PC-3 (cell line): ENCODE measurements at regions of chr10 and their contacts with region 1.

Region 1: GRCh38 chr10:64760371-64760770 is 1239.2 kb downstream of the REEP3 start:
- DNase-seq: peak; percentile 62
- ATAC-seq: peak; percentile 37; the same call in 1 of the 2 replicates
- H3K4me3 ChIP-seq: no peak overlapping the region
- H3K27ac ChIP-seq: no peak overlapping the region
- H3K4me1 ChIP-seq: no peaks in the 10 kb centered on the region
- H3K27me3 ChIP-seq: no peaks in the 10 kb centered on the region
- CTCF ChIP-seq: no peak

Region 2: DNA sequence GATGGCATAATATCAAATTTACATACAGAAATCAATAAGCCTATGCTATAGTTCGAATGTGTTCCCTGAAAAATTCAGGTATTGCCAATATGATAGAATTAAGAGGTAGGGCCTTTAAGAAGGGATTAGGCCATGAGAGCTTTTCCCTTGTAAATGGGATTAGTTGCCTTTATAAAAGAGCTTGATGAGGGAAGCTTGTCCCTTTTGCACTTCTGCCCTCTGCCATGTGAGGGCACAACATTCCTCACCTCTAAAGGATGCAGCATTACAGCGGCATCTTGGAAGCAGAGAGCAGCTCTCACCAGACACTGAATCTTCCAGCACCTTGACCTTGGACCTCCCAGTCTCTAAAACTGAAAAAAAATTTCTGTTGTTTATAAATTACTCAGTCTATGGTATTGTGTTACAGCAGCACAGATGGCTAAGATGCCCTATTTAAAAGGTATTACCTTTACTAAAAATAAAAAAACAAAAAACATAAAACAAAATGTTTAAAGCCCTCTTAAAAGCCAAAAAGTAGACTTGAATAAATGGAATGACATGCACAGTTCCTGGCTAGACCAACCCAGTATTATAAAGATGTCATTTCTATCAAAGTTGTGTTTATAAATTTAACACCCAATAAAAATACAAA is 329.6 kb before region 1 on chr10:
- CTCF ChIA-PET with region 1: no interaction called
- POLR2A ChIA-PET with region 1: no interaction called
- intact Hi-C with region 1: no loop called
- DNase-seq: peak; percentile 81
- ATAC-seq: peak; percentile 99
- H3K4me3 ChIP-seq: no peak overlapping the region
- H3K27ac ChIP-seq: no peak overlapping the region
- H3K4me1 ChIP-seq: no peaks in the 10 kb centered on the region
- H3K27me3 ChIP-seq: no peaks in the 10 kb centered on the region
- CTCF ChIP-seq: peak; percentile 88

Region 3: DNA sequence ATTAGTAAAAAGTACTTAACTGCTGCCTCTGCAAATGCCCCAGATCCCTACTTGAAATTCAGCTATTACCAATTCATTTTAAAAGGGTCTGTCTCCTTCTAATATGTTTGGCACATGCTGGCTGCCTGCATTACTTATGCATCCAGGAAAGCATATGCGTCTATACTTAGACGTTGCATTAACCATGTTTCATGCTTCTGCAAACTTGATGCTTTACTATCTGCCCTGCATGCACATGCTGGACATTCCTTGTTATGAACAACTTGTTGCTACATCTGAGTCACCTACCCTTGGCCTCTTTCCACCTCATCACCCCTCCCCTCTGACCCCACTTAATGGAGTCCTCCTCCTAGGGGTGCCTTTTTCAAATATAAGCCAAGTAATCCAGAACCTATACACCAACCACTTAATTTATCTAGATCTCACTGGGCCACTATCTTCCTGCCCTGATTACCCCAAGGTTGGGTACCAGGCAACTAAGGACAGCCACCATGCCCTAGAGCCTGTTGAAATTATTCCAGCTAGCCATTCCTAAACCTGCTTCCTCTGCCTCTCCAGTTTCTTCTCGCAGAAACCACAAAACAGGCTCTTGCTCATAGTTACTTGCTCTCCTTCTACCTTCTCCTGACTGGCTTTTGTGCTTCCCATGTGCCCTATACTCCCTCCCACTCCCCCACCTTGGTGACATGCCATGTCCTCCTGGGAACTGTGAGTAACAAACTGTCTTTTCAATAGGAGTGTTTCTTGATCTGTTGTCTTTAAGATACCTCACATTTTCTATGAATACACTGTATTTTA is 51.3 kb before region 1 on chr10:
- CTCF ChIA-PET with region 1: no interaction called
- POLR2A ChIA-PET with region 1: no interaction called
- intact Hi-C with region 1: loop called (anchors 10 kb)
- DNase-seq: peak; percentile 60
- ATAC-seq: peak; percentile 79
- H3K4me3 ChIP-seq: no peak overlapping the region
- H3K27ac ChIP-seq: no peak overlapping the region
- H3K4me1 ChIP-seq: peaks cover 5% of the 10 kb centered on the region; the same call in 1 of the 2 replicates
- H3K27me3 ChIP-seq: no peaks in the 10 kb centered on the region
- CTCF ChIP-seq: no peak

Region 4: DNA sequence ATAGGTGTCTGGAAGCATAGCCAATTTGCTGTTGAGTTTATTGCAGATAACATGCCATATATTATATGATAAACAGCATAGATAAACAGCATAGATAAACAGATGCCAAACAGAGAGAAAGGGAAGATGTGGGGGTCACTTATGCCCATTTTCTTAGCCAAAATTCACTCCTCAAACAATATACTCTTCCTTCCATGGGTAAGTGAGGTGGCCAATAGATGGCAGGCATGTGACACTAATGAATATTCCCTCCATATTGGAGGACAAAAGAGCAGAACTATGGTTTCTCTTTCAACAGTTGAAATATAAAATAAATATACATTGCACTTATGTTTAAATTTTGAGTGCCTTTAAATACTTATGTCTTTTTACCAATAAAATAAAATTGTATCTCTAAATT is 26.4 kb before region 1 on chr10:
- CTCF ChIA-PET with region 1: no interaction called
- POLR2A ChIA-PET with region 1: no interaction called
- intact Hi-C with region 1: no loop called
- DNase-seq: peak; percentile 86
- ATAC-seq: peak; percentile 84
- H3K4me3 ChIP-seq: no peak overlapping the region
- H3K27ac ChIP-seq: no peak overlapping the region
- H3K4me1 ChIP-seq: peaks cover 11% of the 10 kb centered on the region
- H3K27me3 ChIP-seq: no peaks in the 10 kb centered on the region
- CTCF ChIP-seq: peak; percentile 91